ENCODE measurements at regions of chr6 and their contacts with region 1.

Region 1: DNA sequence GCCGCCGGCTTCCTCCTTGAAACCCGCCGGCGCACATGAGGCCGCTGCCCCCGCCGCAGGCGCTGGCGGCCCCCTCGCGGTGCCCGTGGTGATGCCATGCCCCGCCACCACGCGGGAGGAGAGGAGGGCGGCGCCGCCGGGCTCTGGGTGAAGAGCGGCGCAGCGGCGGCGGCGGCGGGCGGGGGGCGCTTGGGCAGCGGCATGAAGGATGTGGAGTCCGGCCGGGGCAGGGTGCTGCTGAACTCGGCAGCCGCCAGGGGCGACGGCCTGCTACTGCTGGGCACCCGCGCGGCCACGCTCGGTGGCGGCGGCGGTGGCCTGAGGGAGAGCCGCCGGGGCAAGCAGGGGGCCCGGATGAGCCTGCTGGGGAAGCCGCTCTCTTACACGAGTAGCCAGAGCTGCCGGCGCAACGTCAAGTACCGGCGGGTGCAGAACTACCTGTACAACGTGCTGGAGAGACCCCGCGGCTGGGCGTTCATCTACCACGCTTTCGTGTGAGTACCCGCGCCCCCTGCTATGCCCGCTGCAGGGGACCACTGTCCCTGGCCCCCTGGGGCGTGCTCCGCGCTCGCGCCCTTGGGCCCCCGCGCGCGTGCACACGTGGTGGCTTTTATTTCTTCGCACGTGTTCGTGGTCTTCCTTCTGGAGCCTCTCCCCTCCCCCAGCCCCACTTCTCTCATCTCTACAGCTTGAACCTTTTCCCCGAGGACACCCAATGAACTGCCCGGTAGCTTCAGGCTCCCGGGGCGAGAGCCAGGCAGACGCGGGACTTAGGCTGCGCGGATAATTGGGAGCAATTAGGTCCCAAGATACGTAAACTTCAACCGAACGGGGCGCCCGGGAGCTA is 453 bp downstream of the KCNQ5 start:
- DNase-seq: peak; percentile 22 to 36
- ATAC-seq: peak; percentile 83 to 91
- H3K4me3 ChIP-seq: peak overlapping the region; percentile 72
- H3K27ac ChIP-seq: peak overlapping the region; percentile 71 to 89
- H3K4me1 ChIP-seq: peaks cover 6% of the 10 kb centered on the region; the same call in 1 of the 3 replicates
- CTCF ChIP-seq: no peak; the same call in 2 of the 3 replicates
- EP300 ChIP-seq: no peak
- POLR2A ChIP-seq: no peak
- RAD21 ChIP-seq: no peak

Region 2: DNA sequence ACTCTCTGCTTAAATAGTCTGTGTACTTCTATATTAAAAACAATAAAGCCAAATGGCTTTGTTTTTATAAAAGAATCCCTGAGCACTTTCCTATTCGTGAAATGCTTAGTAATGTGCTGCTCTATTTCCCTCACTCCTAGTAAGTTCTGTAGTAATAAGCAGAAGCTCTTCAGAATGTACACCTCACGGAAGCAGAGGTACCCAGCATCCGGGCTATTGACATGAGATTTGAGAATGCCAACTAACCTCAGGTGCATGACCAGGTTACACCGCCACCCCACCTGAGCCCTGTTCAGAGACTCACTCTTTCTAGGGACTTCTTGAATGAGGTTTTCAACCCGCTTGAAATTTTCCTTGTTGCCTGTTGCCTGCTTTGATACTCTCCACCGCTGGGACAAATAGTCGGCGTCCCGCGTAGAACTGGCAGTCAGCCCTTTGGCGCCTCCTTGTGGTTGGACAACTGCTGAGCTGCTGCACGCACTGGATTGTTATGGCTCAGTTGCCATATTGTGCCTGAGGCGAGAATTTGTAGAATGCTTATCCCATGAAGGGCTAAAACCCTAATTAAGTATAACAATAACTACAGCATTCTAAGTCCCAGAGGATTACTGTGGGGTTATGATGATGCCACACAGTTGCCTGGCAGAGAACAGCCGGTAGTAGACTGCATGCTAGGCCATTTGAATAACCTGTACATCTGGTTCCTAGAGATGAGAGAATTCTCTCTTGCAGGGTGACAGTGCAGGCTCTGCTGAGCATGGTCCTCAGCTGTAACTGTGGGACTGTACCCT is 507.5 kb after region 1 on chr6:
- CTCF ChIA-PET with region 1: interaction called, 125 read pairs
- POLR2A ChIA-PET with region 1: no interaction called
- DNase-seq: peak; percentile 37 to 61
- ATAC-seq: peak; percentile 99
- H3K4me3 ChIP-seq: no peak overlapping the region
- H3K27ac ChIP-seq: peak overlapping the region in 1 of 2 experiments; percentile 61; a peak in 1 of 6 replicates
- H3K4me1 ChIP-seq: no peaks in the 10 kb centered on the region; the same call in 2 of the 3 replicates
- CTCF ChIP-seq: peak; percentile 90
- EP300 ChIP-seq: no peak
- POLR2A ChIP-seq: no peak
- RAD21 ChIP-seq: peak; percentile 95 to 97